ENCODE measurements at regions of chr2 and their contacts with region 1.

Region 1: GRCh38 chr2:37672104-37672869 is 845 bp upstream of the CDC42EP3 start:
- DNase-seq: peak; percentile 85
- H3K4me3 ChIP-seq: peak overlapping the region; percentile 59 to 84 (median 67)
- H3K27ac ChIP-seq: peak overlapping the region; percentile 75
- H3K4me1 ChIP-seq: peaks cover 43% of the 10 kb centered on the region
- H3K27me3 ChIP-seq: no peaks in the 10 kb centered on the region
- CTCF ChIP-seq: no peak
- POLR2A ChIP-seq: no peak

Region 2: GRCh38 chr2:37454851-37455762 is 217.2 kb before region 1 on chr2:
- CTCF ChIA-PET with region 1: interaction called, 3 read pairs
- POLR2A ChIA-PET with region 1: no interaction called
- dilution Hi-C with region 1: no loop called
- intact Hi-C with region 1: loop called (anchors 1 kb)
- DNase-seq: peak; percentile 95
- H3K4me3 ChIP-seq: no peak overlapping the region
- H3K27ac ChIP-seq: peak overlapping the region; percentile 99
- H3K4me1 ChIP-seq: peaks cover 67% of the 10 kb centered on the region
- H3K27me3 ChIP-seq: no peaks in the 10 kb centered on the region
- CTCF ChIP-seq: no peak
- POLR2A ChIP-seq: peak; percentile 9

Region 3: DNA sequence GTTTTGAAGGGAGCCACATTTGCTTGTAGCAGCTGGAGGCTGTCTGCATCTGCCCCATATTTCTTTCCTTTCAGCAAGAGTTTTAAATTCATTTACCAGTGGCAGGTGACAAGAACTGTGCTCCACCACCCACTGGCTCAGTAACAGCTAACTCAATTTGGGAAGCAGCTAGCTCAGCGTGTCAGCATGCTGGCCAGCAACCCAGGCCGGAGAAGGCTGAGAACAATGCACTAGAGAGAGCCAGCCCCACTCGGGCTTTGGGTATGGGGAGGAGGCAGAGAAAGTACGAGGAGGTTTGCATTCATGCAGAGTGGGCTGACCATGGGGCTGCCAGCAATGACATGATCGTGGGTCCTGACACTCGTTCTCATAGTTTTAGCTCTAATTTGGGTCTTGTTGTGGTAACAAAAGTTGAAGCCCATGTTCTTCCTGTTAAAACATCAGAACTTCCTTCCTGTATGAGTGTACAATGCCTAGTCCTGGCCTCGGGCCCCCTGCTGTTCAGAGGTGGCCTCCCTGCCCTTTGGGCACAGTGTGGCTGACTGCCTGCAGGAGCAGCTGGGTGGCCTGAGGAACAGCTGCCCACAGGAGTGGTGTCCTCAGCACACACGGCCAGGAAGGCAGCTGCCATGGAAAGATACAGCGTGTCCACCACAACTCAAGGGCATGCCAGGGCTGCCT is 23.8 kb before region 1 on chr2:
- CTCF ChIA-PET with region 1: interaction called, 9 read pairs
- POLR2A ChIA-PET with region 1: no interaction called
- dilution Hi-C with region 1: no loop called
- intact Hi-C with region 1: loop called (anchors 1 kb)
- DNase-seq: peak; percentile 80
- H3K4me3 ChIP-seq: no peak overlapping the region
- H3K27ac ChIP-seq: peak overlapping the region; percentile 68
- H3K4me1 ChIP-seq: peaks cover 80% of the 10 kb centered on the region
- H3K27me3 ChIP-seq: no peaks in the 10 kb centered on the region
- CTCF ChIP-seq: peak; percentile 33 to 41
- POLR2A ChIP-seq: no peak

Region 4: DNA sequence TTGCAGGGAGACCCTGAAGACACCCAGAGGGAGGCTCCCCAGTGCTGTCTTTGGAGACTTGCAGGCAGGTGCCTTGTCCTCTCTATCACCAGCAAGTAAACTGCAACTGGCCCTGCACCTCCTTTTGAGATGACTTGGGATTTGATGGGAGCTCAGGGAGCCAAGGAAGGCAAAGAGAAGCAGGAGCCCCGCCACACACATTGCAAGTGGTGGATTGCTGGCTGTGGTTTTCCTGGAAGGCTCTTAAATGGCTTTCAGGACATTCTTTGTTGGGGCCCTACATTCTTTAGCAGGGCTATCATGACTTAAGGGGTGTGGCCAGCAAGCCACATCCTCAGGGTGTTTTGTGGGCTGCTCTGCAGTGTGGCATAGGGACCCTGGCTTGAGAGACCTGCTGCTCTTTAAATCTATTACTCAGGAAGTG is 39.0 kb after region 1 on chr2:
- CTCF ChIA-PET with region 1: no interaction called
- POLR2A ChIA-PET with region 1: no interaction called
- dilution Hi-C with region 1: no loop called
- intact Hi-C with region 1: loop called (anchors 2 kb)
- DNase-seq: no peak
- H3K4me3 ChIP-seq: no peak overlapping the region
- H3K27ac ChIP-seq: no peak overlapping the region
- H3K4me1 ChIP-seq: peaks cover 12% of the 10 kb centered on the region
- H3K27me3 ChIP-seq: no peaks in the 10 kb centered on the region
- CTCF ChIP-seq: no peak
- POLR2A ChIP-seq: no peak

Region 5: DNA sequence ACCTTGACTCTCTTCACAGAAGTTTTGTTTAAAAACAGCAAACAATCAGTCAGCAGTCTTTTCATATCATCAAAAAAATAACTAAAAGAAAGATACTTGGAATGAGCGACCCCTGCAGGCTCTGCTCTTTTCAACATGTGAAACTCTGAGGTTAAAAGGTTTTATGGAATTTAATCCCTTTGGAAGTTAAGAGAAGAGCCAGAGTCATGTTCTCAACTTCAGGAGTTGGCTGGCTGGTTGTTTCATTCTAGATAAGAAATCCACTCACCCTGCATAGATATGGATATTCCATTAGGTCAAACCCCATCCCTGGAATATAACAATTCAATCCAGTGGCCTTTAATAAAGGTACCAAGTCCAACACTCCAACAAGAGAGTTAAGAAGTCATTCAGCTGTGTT is 137.2 kb after region 1 on chr2:
- CTCF ChIA-PET with region 1: interaction called, 4 read pairs
- POLR2A ChIA-PET with region 1: no interaction called
- dilution Hi-C with region 1: no loop called
- intact Hi-C with region 1: loop called (anchors 1 kb)
- DNase-seq: peak; percentile 77
- H3K4me3 ChIP-seq: no peak overlapping the region
- H3K27ac ChIP-seq: no peak overlapping the region
- H3K4me1 ChIP-seq: peaks cover 13% of the 10 kb centered on the region
- H3K27me3 ChIP-seq: no peaks in the 10 kb centered on the region
- CTCF ChIP-seq: peak; percentile 42 to 45
- POLR2A ChIP-seq: no peak

Region 6: DNA sequence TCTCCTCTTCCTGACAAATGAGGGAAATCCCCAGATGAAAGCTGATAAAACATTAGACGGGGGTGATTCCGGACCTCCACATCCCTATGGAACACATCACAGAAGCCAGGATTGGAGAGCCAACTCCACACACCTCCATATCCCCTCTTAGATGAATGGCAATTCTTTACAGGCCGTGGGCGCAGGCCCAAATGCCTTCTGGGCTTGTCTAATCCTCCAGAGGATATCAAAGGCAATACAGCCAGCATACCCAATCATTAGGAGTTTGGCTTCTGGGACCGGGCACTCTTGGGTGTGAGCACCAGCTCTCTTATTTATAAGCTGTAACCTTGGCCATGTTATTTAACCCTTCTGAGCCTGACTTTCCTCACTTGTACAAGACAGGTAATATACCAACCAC is 418.6 kb after region 1 on chr2:
- CTCF ChIA-PET with region 1: no interaction called
- POLR2A ChIA-PET with region 1: no interaction called
- dilution Hi-C with region 1: no loop called
- intact Hi-C with region 1: no loop called
- DNase-seq: no peak
- H3K4me3 ChIP-seq: no peak overlapping the region
- H3K27ac ChIP-seq: no peak overlapping the region
- H3K4me1 ChIP-seq: no peaks in the 10 kb centered on the region
- H3K27me3 ChIP-seq: peaks cover 6 to 14% of the 10 kb centered on the region in 2 experiments
- CTCF ChIP-seq: no peak
- POLR2A ChIP-seq: no peak

Measured in endothelial cell of umbilical vein (primary cell).